Cardiac septum (tissue), 1 donor: ENCODE measurements at regions of chr4 and their contacts with region 1.

Region 1: GRCh38 chr4:15681207-15682015 is at the start of gene FAM200B:
- DNase-seq: peak; percentile 100
- total RNA-seq, gene FAM200B: 21.6 TPM

Region 2: DNA sequence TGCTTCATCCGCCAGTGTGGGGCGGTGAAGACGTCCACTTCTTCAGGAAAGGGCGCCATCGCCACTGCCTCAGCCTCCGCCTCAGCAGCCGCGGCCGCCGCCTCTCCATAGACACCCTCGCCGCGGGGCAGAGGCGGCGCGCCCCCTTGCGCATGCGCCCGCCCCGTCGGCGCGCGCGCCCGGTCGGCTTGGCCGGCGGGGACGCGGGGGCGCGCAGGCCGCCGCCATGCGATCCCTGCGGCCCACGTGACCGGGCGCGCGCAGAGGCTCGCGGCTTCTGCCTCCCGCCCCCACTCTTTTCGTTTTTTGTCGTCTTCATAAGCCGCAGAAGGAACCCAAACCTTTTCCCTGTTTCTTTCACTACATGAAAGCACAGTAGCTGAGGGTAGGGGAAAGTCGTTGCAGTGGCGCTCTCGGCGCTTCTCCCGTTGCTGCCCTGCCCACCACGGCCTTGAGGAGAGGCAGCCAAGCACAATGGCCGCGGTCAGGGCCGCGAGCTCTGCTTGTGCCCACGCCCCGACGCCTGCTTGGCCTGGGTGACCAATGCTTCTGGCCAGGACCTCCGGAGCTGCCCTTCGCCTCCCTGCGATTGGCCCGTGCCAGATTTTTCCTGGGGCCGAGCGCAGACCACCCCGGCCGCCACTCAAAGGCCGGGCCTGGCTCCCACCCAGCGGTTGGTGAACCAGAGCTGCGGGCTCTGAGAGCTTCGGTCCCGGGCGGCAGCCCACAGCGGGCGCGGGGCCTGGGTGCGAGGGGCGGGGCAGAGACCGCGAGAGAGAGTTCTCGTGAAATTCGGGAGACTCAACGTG is 26.0 kb before region 1 on chr4 and contains the start of gene FBXL5:
- intact Hi-C with region 1: loop called (anchors 1 kb)
- DNase-seq: peak; percentile 92
- total RNA-seq, gene FBXL5: 60.9 TPM